ENCODE measurements at regions of chr5 and their contacts with region 1.

Region 1: GRCh38 chr5:36690041-36690961 is 83.9 kb downstream of the SLC1A3 start:
- DNase-seq: peak; percentile 79
- ATAC-seq: peak; percentile 86
- H3K4me3 Mint-ChIP-seq: peak overlapping the region; percentile 76
- H3K27ac Mint-ChIP-seq: peak overlapping the region; percentile 47
- H3K4me1 Mint-ChIP-seq: peaks cover 11% of the 10 kb centered on the region
- H3K27me3 Mint-ChIP-seq: peaks cover 23% of the 10 kb centered on the region
- CTCF ChIP-seq: peak; percentile 81

Region 2: GRCh38 chr5:36269479-36270219 is 420.7 kb before region 1 on chr5:
- CTCF ChIA-PET with region 1: interaction called, 8 read pairs
- POLR2A ChIA-PET with region 1: no interaction called
- intact Hi-C with region 1: loop called (anchors 5 kb)
- DNase-seq: no peak
- ATAC-seq: no peak
- H3K4me3 Mint-ChIP-seq: no peak overlapping the region
- H3K27ac Mint-ChIP-seq: no peak overlapping the region
- H3K4me1 Mint-ChIP-seq: no peaks in the 10 kb centered on the region
- H3K27me3 Mint-ChIP-seq: peaks cover 9% of the 10 kb centered on the region
- CTCF ChIP-seq: no peak

Region 3: GRCh38 chr5:36701085-36701698 is 10.9 kb after region 1 on chr5:
- CTCF ChIA-PET with region 1: interaction called, 25 read pairs
- POLR2A ChIA-PET with region 1: no interaction called
- intact Hi-C with region 1: no loop called
- DNase-seq: no peak
- ATAC-seq: no peak
- H3K4me3 Mint-ChIP-seq: no peak overlapping the region
- H3K27ac Mint-ChIP-seq: no peak overlapping the region
- H3K4me1 Mint-ChIP-seq: no peaks in the 10 kb centered on the region
- H3K27me3 Mint-ChIP-seq: peaks cover 6% of the 10 kb centered on the region
- CTCF ChIP-seq: no peak

Measured in activated CD8-positive, alpha-beta T cell treated with anti-CD3 and anti-CD28 coated beads for 36 hours (primary cell).